Naive thymus-derived CD4-positive, alpha-beta T cell (primary cell): ENCODE measurements at regions of chr17 and their contacts with region 1.

Region 1: DNA sequence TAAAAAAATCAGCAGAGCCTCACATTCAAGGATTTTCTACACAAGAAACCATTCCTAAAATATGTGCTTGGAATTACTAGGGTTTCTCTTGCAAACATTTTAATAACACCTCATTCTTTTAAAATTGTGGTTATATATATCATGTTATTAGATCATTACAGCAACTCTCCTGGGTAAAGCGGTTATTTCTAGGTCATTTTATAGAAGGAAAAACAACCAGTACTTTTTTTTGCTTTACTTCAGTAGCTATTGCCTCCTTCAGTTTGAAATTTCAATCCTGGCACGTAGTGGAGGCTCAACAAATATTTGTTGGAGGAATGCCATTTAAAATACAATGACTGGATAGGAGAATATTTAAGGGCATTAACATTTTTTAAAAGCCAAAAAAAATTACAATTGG is 220.6 kb downstream of the CDRT15L2 start:
- DNase-seq: no peak
- ATAC-seq: no peak
- H3K4me3 ChIP-seq: no peak overlapping the region
- H3K4me3 Mint-ChIP-seq: no peak overlapping the region
- H3K27ac ChIP-seq: no peak overlapping the region
- H3K27ac Mint-ChIP-seq: no peak overlapping the region
- H3K4me1 ChIP-seq: no peaks in the 10 kb centered on the region
- H3K4me1 Mint-ChIP-seq: peaks cover 0 to 16% (median 6%) of the 10 kb centered on the region in 7 donors
- H3K27me3 ChIP-seq: no peaks in the 10 kb centered on the region
- H3K27me3 Mint-ChIP-seq: peaks cover 0 to 4% (median 0%) of the 10 kb centered on the region in 5 donors

Region 2: GRCh38 chr17:20922128-20922670 is 122.1 kb after region 1 on chr17:
- CTCF ChIA-PET with region 1: no interaction called
- POLR2A ChIA-PET with region 1: no interaction called
- intact Hi-C with region 1: no loop called
- DNase-seq: no peak
- ATAC-seq: no peak
- H3K4me3 ChIP-seq: no peak overlapping the region
- H3K4me3 Mint-ChIP-seq: no peak overlapping the region
- H3K27ac ChIP-seq: no peak overlapping the region
- H3K27ac Mint-ChIP-seq: peak overlapping the region in 1 of 9 donors; percentile 20
- H3K4me1 ChIP-seq: no peaks in the 10 kb centered on the region
- H3K4me1 Mint-ChIP-seq: no peaks in the 10 kb centered on the region
- H3K27me3 ChIP-seq: no peaks in the 10 kb centered on the region
- H3K27me3 Mint-ChIP-seq: peaks cover 0 to 55% (median 20%) of the 10 kb centered on the region in 5 donors

Region 3: DNA sequence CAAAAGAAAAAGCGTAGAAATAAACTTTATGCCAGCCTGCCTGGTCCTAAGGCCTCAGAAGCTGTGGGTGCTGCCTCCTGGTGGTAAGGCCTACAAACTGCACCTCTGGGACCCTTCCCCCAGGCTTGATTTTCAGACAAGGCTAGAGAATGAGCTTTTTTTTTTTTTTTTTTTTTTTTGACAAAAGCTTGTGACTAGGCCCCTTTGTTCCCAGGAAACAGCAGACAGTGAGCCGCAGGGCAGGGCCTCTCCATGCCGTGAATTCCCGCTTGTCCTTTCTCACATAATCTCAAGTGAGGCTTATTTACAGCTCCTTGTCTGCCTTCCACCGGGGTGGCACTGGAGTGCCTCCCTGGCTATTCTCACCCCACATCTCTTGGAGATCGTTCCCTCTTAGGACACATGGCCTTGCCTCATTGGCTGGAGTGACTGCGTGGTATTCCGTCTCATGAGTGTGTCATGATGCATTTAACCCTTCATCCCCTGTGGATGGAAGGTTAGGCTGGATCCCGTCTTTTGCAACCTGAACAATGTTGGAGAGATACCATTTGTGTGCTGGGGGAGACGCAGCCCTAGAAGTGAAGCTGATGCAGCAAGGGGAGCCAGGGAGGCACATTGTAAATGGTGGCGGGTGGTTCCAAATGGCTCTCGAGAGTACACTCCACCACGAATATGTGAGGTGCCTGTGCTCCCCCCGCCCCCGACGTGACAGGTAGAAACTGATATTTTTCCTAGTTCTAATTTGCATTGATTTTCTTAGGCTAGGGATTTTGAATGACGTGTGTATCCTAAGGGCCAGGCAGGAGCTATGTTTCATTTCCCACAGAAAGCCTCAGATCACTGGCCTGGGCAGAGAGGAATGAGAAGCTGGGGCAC is 193.1 kb after region 1 on chr17:
- CTCF ChIA-PET with region 1: no interaction called
- POLR2A ChIA-PET with region 1: interaction called, 3 read pairs
- intact Hi-C with region 1: loop called in 1 of 2 experiments (anchors 1 kb)
- DNase-seq: peak; percentile 51 to 75 (median 65)
- ATAC-seq: peak; percentile 88
- H3K4me3 ChIP-seq: no peak overlapping the region
- H3K4me3 Mint-ChIP-seq: peak overlapping the region in 2 of 10 donors; percentile 21 to 25
- H3K27ac ChIP-seq: no peak overlapping the region
- H3K27ac Mint-ChIP-seq: peak overlapping the region in 3 of 9 donors; percentile 24 to 70 (median 38)
- H3K4me1 ChIP-seq: peaks cover 0 to under 1% of the 10 kb centered on the region in 2 donors
- H3K4me1 Mint-ChIP-seq: peaks cover 6 to 14% (median 7%) of the 10 kb centered on the region in 7 donors
- H3K27me3 ChIP-seq: no peaks in the 10 kb centered on the region
- H3K27me3 Mint-ChIP-seq: no peaks in the 10 kb centered on the region